ENCODE measurements at regions of chr5 and their contacts with region 1.

Region 1: DNA sequence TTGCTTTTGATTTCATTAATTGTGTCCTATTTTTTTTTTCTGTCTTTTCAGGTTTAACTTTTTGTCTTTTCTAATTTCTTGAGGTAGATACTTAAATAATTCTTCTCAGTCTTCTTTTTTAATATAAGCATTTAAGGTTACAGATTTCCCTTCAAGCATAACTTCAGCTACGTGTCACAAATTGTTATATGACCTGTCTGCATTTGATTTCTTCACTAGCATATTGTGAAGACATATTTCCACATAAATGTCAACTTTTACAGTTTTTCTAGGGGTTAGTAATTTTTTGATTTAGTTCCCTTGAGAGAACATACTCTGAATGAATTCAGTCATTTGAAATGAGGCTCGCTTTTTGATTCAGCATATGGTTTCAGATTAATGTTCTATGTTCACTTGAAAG is 35.6 kb downstream of the RASA1 start:
- DNase-seq: no peak
- H3K4me3 ChIP-seq: no peak overlapping the region
- H3K27ac ChIP-seq: no peak overlapping the region
- H3K4me1 ChIP-seq: no peaks in the 10 kb centered on the region
- H3K27me3 ChIP-seq: no peaks in the 10 kb centered on the region
- CTCF ChIP-seq: no peak

Region 2: GRCh38 chr5:85843535-85843934 is 1459.8 kb before region 1 on chr5:
- intact Hi-C with region 1: no loop called
- DNase-seq: no peak
- H3K4me3 ChIP-seq: no peak overlapping the region
- H3K27ac ChIP-seq: no peak overlapping the region
- H3K4me1 ChIP-seq: no peaks in the 10 kb centered on the region
- H3K27me3 ChIP-seq: no peaks in the 10 kb centered on the region
- CTCF ChIP-seq: no peak

Region 3: GRCh38 chr5:87278590-87279100 is 24.7 kb before region 1 on chr5:
- intact Hi-C with region 1: loop called (anchors 1 kb)
- DNase-seq: no peak
- H3K4me3 ChIP-seq: no peak overlapping the region
- H3K27ac ChIP-seq: no peak overlapping the region
- H3K4me1 ChIP-seq: peaks cover 0 to 3% of the 10 kb centered on the region in 2 donors
- H3K27me3 ChIP-seq: no peaks in the 10 kb centered on the region
- CTCF ChIP-seq: no peak

Region 4: DNA sequence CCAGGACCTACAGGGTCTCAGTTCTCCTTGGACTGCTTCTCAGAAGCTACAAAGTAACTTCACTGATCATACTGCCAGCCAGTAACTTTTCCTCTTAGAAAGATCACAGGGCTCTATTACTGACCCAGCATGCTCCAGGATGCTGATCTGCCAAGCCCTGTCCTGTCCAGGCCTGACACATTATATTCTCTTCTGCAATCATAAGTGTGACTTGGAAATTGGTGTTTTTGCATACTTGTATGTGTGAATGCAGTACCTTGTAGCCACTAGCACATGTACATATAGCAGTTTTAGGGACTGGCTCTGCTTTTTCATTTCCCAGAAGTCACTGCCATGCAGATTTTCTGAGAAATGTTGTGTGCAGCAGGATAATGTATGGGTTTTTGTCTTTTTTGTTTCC is 149.5 kb after region 1 on chr5:
- intact Hi-C with region 1: no loop called
- DNase-seq: no peak
- H3K4me3 ChIP-seq: no peak overlapping the region
- H3K27ac ChIP-seq: no peak overlapping the region
- H3K4me1 ChIP-seq: no peaks in the 10 kb centered on the region
- H3K27me3 ChIP-seq: no peaks in the 10 kb centered on the region
- CTCF ChIP-seq: no peak

Region 5: DNA sequence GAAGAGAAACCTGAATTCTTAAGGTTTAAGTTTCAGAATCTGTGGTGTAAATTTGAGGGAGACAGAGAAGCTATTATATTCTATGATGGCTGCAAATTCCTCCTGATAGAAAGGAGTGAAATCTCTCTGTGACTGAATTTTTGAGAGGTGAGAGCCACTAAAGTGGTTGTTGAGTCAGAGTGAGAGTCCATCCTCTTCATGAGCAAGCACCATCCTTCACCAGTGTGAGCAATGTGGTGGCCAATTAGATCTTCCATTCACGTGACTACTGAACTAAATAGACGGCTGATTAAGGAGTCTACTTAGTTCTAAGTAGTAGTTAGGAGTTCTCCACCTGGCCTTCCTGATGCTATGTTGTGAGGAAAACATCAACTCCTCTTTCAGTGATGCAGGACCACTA is 257.2 kb after region 1 on chr5:
- intact Hi-C with region 1: no loop called
- DNase-seq: no peak
- H3K4me3 ChIP-seq: no peak overlapping the region
- H3K27ac ChIP-seq: no peak overlapping the region
- H3K4me1 ChIP-seq: no peaks in the 10 kb centered on the region
- H3K27me3 ChIP-seq: no peaks in the 10 kb centered on the region
- CTCF ChIP-seq: no peak